Activated CD4-positive, alpha-beta T cell treated with anti-CD3 and anti-CD28 coated beads for 36 hours (primary cell): ENCODE measurements at regions of chr7 and their contacts with region 1.

Region 1: DNA sequence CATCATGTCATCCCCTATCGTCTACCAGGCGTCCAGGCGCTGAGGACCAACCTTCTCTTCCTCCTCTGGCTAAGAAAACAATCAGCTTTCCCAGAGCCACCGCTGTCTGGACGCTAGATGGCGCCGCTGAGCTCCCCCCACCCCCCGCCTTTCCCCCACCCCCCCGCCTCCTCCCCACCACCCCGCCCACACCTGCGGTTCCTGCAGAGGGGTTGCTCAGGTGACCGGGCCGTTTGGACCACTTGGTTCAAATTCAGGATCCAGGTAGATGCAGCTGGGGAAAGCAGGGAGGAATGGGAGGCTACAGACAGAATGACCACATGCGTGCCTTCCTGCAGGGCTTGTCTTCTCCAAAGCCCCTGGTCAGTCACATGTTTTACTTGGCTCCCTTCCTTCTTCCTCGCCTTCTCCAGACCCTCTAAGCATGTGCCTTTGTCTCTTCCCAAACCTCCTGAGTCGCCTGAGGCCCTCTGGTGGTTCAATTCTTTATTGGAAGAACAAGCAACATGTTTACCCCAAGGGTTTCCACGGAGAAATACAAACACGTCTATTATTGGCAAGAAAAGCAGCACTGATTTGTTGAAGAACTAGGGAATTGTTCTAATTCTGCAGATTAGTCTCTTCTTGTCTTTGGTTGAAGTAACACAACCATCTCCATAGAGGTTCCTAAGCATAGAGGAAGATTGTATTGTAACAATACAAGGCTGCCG is 24.7 kb downstream of the AOC1 start:
- DNase-seq: peak; percentile 76
- ATAC-seq: peak; percentile 71
- H3K4me3 Mint-ChIP-seq: no peak overlapping the region
- H3K27ac Mint-ChIP-seq: no peak overlapping the region
- H3K4me1 Mint-ChIP-seq: peaks cover 11% of the 10 kb centered on the region
- H3K27me3 Mint-ChIP-seq: peaks cover 9% of the 10 kb centered on the region

Region 2: GRCh38 chr7:150778738-150779301 is 98.2 kb before region 1 on chr7:
- CTCF ChIA-PET with region 1: interaction called, 8 read pairs
- POLR2A ChIA-PET with region 1: no interaction called
- intact Hi-C with region 1: loop called in 1 of 2 experiments (anchors 2 kb)
- DNase-seq: peak; percentile 88
- ATAC-seq: peak; percentile 75
- H3K4me3 Mint-ChIP-seq: no peak overlapping the region
- H3K27ac Mint-ChIP-seq: no peak overlapping the region
- H3K4me1 Mint-ChIP-seq: peaks cover 4% of the 10 kb centered on the region
- H3K27me3 Mint-ChIP-seq: peaks cover 3% of the 10 kb centered on the region

Region 3: DNA sequence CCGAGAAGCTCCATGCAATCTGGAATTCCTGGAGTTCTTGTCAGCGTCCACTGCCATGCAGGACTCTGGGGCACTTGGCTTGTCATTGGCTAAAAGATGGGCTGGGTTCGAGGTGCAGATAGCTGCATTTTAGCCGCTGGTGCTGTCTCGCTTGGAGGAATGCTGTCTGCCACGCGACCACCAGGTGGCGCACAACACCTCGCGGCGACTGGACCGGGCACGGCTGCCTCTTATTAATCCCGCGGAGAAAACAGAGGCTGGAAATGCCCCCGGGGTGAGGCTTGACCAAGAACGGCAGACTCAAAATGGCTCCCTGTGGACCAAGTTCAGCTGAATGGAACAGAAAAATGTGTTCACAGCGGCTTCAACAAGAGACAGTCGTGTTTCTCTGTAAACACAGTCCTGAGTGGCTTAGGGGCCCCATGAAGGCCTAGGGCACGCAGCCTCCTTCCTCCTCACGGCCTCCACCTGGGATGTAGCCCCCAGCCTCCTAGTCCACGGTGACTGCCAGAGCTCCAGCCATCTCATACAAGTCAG is 21.6 kb after region 1 on chr7:
- CTCF ChIA-PET with region 1: interaction called, 18 read pairs
- POLR2A ChIA-PET with region 1: no interaction called
- intact Hi-C with region 1: no loop called
- DNase-seq: peak; percentile 89
- ATAC-seq: peak; percentile 86
- H3K4me3 Mint-ChIP-seq: no peak overlapping the region
- H3K27ac Mint-ChIP-seq: peak overlapping the region; percentile 15
- H3K4me1 Mint-ChIP-seq: peaks cover 12% of the 10 kb centered on the region
- H3K27me3 Mint-ChIP-seq: peaks cover 31% of the 10 kb centered on the region